ENCODE measurements at regions of chr4 and their contacts with region 1.

Region 1: DNA sequence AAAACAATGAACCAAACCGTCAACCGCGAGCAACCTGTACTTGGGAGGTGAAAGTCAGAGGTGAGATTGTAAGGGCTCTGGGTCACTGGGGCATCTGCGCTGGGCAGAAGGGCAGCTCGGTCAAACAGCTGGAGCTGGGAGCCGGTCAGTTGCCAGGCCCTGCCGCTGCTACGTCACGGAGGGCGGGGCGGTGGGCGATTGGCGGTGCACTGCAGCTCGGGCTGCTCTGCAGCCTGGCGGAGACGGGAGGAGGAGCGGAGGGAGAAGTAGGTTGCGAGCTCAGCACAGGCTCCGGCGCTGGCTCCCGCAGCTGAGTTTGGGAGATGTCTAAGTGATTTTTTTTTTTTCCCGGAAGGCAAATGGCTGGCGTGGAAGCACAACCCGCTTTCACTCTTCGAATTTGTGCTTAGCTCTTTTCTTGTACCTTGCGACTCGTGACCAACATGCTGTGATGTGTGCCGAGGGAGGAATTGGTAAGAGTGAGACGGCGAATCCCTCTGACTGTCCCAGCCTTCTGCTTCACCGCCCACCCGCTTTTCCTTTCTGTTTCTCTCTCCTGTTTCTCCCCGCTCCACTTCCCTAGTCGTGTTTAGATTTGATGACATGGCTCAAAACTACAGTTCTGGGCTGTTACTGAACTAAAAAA is at the start of gene ATP10D:
- DNase-seq: peak; percentile 88
- H3K4me3 ChIP-seq: peak within 1 kb of the TSS; percentile 73
- H3K27ac ChIP-seq: peak within 1 kb of the TSS; percentile 38
- H3K4me1 ChIP-seq: peaks cover 35% of the 10 kb centered on the region
- CTCF ChIP-seq: no peak
- total RNA-seq, gene ATP10D: 6.2 and 11.7 TPM in 2 replicates

Region 2: GRCh38 chr4:47122592-47123291 is 362.4 kb before region 1 on chr4:
- CTCF ChIA-PET with region 1: no interaction called
- POLR2A ChIA-PET with region 1: no interaction called
- intact Hi-C with region 1: loop called (anchors 5 kb)
- DNase-seq: peak; percentile 71
- H3K4me3 ChIP-seq: no peak overlapping the region
- H3K27ac ChIP-seq: no peak overlapping the region
- H3K4me1 ChIP-seq: no peaks in the 10 kb centered on the region
- CTCF ChIP-seq: peak; percentile 97

Region 3: DNA sequence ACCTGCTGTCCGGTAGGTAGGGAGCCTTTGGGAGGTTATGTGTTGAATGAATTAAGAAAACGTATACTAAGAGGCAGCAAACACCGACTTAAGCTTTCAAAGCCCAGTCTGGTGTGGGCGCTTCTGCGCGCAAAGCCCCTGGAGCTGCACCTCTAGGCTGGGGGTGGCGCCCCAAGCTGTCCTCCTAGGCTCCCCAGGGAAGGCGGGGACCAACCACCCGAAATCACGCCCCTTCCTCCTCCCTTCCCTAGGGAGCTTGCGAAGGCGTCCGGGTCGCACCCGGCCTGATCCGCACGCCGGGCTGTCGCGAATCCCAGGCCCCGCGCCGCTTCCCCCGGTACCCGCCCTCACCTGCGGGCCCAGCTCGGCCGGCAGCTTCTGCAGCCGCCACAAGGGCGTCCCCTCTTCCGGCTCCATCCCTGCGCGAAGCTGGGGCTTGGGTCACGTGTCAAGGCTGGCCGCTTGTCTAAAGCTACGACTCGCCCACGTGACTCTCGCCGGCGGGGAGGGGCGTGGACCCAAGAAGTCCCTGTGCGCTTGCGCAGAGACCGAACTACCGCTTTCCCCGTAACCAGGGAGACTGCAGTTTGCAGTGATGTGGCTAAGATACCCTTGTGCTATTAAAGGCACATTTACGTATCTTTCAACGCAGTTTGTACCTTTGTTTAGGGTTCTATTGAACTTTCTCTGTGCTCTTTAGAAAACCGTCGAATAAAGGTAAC is 21.8 kb before region 1 on chr4 and contains the start of gene COMMD8:
- CTCF ChIA-PET with region 1: interaction called, 4 read pairs
- POLR2A ChIA-PET with region 1: interaction called, 140 read pairs
- intact Hi-C with region 1: loop called (anchors 1 kb)
- DNase-seq: peak; percentile 99
- H3K4me3 ChIP-seq: peak within 1 kb of the TSS; percentile 84
- H3K27ac ChIP-seq: peak within 1 kb of the TSS; percentile 81
- H3K4me1 ChIP-seq: peaks cover 45% of the 10 kb centered on the region
- CTCF ChIP-seq: peak; percentile 46; the same call in 1 of the 2 replicates
- total RNA-seq, gene COMMD8: 25.8 and 29.1 TPM in 2 replicates

Region 4: GRCh38 chr4:47499700-47500099 is 14.5 kb after region 1 on chr4:
- CTCF ChIA-PET with region 1: interaction called, 3 read pairs
- POLR2A ChIA-PET with region 1: interaction called, 66 read pairs
- intact Hi-C with region 1: no loop called
- DNase-seq: peak; percentile 58
- H3K4me3 ChIP-seq: peak overlapping the region; percentile 7
- H3K27ac ChIP-seq: peak overlapping the region; percentile 35
- H3K4me1 ChIP-seq: peaks cover 22% of the 10 kb centered on the region
- CTCF ChIP-seq: no peak

Region 5: DNA sequence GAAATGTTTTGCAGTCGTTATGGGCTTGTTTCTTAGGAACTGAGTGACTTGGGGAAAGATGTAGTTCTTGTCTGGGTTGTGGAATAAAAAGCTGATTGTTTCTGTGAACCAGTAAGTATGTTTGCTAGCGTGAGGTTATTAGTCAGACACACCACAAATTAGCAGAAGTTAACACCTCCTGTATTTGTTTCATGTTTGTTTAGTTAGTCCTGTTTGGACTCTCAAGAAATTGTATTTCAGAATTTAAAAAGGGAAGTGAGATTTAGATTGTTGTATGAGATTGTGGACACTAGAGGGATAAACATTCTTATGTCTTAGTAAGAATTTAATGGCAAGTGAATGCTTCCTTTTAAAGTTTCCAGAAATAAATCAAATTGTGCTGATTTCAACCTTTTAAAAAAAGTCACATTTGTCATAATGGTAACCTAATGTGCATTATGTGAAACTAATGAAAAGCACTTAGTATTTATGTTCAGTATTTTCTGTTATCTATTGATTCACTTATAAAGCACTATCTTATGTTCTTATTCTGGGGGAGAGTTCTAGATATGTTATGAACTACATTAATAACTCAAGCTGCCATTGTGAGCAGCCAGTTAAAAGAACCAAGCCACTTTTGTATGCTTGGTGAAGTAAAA is 25.5 kb after region 1 on chr4:
- CTCF ChIA-PET with region 1: no interaction called
- POLR2A ChIA-PET with region 1: interaction called, 17 read pairs
- intact Hi-C with region 1: no loop called
- DNase-seq: no peak
- H3K4me3 ChIP-seq: no peak overlapping the region
- H3K27ac ChIP-seq: no peak overlapping the region
- H3K4me1 ChIP-seq: peaks cover 6% of the 10 kb centered on the region
- CTCF ChIP-seq: peak; percentile 56

Region 6: DNA sequence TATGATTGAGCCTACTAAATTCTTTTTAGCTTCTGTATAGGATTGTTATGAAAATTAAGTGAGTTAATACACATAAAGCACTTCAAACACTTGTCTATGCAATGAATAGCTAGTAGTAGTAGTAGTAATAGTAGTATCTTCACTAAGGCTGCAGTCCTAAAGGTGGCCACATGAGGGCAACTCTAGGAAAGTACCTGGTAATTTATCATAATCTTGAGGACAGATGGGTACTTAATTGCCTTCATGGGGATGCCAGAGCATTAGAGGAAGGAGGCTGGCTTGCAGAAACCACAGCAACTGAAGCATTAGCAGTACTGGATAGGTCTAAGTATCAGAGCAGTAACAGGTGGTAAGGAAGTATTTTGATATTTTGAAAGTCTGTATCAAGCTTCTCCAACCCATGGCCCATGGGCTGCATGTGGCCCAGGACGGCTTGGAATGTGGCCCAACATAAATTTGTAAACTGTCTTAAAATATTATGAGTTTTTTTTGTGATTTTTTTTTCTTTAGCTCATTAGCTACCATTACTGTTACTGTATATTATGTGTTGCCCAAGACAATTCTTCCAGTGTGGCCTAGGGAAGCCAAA is 548.7 kb after region 1 on chr4:
- CTCF ChIA-PET with region 1: no interaction called
- POLR2A ChIA-PET with region 1: no interaction called
- intact Hi-C with region 1: loop called (anchors 10 kb)
- DNase-seq: peak; percentile 79
- H3K4me3 ChIP-seq: no peak overlapping the region
- H3K27ac ChIP-seq: peak overlapping the region; percentile 7
- H3K4me1 ChIP-seq: peaks cover 71% of the 10 kb centered on the region
- CTCF ChIP-seq: peak; percentile 88

Measured in OCI-LY7 (cell line).